ENCODE measurements at regions of chr4 and their contacts with region 1.

Region 1: DNA sequence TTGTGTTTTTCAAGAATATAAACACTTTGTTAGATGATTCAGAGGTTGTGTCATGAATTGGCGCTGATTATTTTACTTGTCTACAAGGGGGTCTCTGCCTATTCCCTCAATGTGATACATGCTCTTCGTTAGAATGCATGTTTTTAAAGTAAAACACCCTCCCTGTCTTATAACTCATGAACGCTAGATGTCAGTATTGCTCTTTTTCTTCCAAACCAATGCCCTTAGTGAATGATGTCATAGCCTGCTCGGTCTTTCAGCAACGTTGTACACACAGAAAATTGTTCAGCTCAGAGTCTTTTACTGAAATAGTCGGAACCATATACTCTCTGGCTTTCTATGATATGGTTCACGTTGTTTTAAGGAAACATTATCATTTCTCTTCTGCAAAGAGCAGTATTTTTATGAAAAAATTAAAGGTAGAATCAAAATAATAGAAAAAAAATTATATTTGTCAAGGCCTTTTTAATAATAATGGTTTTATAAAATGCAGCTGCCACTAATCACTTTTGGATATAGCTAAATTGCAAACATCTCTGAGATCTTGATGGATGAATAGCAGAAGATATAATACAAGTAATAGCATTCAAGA is 292.9 kb downstream of the TLL1 start:
- DNase-seq: peak; percentile 87
- H3K4me3 ChIP-seq: no peak overlapping the region
- H3K27ac ChIP-seq: no peak overlapping the region
- H3K4me1 ChIP-seq: no peaks in the 10 kb centered on the region
- H3K27me3 ChIP-seq: no peaks in the 10 kb centered on the region
- CTCF ChIP-seq: peak; percentile 74

Region 2: DNA sequence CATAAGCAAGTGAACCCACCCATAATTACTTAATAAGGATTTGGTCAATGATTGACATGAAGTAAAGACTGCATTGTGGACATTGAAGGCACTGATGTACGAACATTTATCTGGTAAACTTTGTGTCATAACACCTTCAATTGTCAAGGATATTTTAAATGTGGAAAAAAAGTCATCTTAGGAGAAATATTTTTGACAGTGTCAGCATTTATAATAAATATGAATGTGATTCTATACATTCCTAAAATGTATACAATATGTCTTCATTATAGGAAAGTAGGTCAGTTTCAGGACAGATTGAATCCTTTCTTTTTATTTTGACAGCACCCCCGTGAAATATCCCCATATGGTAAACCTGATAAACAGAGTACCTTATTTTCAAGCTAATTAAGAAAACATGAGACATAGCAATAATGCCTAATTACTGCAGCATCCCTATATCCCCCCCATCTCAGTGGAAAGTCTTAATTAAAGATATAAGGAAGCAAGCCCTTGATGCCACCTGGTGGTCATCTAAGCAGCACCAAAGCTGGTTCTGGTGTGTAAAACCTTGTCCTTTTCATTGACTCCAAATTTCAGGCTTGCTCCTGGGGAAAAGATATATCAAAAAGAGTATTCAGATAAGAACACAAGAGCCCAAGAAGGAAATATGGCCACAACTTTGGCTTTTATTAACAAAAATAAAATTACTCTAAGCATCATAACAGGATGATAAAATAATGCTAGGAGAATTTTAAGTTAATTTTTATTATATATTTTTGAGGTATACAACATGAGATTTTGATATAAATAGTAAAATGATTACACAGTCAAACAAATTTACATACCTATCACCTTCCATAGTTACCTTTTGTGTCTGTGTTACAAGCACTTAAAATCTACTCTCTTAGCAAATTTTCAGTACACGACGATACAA is 86.8 kb after region 1 on chr4:
- CTCF ChIA-PET with region 1: interaction called, 3 read pairs
- POLR2A ChIA-PET with region 1: no interaction called
- intact Hi-C with region 1: loop called (anchors 1 kb)
- DNase-seq: peak; percentile 44
- H3K4me3 ChIP-seq: no peak overlapping the region
- H3K27ac ChIP-seq: no peak overlapping the region
- H3K4me1 ChIP-seq: no peaks in the 10 kb centered on the region
- H3K27me3 ChIP-seq: no peaks in the 10 kb centered on the region
- CTCF ChIP-seq: peak; percentile 62

Region 3: DNA sequence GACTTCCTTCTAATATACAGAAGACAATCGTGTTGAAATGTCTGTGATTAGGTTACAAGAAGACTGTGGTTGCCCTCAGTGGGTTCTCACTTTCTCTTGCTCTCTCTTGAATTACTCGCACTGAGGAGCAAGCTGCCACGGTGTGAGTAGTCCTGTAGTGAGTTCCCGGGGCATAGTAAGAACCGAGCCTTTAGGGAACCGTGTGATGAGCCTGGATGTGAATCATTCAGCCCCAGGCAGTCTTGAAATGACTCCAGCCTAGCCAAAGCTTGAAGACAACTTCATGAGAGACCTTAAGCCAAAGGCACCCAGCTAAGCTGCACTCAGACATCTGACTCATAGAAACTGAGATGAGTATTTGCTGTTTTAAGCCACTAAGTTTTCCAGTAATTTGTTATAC is 775.7 kb after region 1 on chr4:
- CTCF ChIA-PET with region 1: no interaction called
- POLR2A ChIA-PET with region 1: no interaction called
- intact Hi-C with region 1: no loop called
- DNase-seq: no peak
- H3K4me3 ChIP-seq: no peak overlapping the region
- H3K27ac ChIP-seq: no peak overlapping the region
- H3K4me1 ChIP-seq: no peaks in the 10 kb centered on the region
- H3K27me3 ChIP-seq: no peaks in the 10 kb centered on the region
- CTCF ChIP-seq: no peak

Region 4: DNA sequence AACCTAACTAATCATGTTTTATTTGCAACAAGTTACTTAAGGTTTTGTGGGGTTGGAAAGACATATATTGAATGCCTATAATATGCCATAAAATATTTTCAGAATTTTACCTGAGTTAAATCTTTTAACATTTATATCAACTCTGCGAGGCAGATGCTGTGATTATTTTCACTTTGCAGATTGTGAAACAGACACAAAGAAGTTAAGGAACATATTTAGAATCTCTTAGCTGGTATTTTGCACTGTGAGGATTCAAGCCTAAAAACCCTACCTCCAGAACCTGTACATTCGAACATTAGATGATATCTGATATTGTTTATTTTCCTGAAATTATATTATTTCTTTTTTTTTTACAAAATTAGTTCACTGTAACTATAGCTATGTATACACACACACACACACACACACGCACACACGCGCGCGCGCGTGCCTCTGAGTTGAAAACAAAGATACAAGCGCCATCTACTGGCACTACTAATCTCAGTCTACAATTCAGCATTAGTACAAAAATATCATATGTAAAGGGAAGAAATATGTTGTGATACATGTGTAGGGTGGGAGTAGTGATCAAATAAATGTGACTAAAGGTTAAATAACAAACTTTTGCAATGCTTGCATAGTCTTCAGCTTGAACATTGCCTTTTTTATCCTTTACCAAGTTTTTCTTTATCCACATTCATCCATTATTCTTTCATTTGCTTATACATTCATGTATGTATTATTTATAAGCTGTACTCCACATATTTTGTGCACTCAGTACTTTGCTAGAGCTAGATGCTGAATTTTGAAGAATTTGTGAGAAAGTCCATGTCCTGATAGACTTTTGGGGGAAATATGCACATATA is 1987.9 kb after region 1 on chr4:
- CTCF ChIA-PET with region 1: no interaction called
- POLR2A ChIA-PET with region 1: no interaction called
- intact Hi-C with region 1: loop called (anchors 5 kb)
- DNase-seq: peak; percentile 81
- H3K4me3 ChIP-seq: peak overlapping the region; percentile 20
- H3K27ac ChIP-seq: no peak overlapping the region
- H3K4me1 ChIP-seq: no peaks in the 10 kb centered on the region
- H3K27me3 ChIP-seq: no peaks in the 10 kb centered on the region
- CTCF ChIP-seq: peak; percentile 91

Measured in A673 (cell line).